Naive thymus-derived CD4-positive, alpha-beta T cell (primary cell): ENCODE measurements at regions of chr5 and their contacts with region 1.

Region 1: DNA sequence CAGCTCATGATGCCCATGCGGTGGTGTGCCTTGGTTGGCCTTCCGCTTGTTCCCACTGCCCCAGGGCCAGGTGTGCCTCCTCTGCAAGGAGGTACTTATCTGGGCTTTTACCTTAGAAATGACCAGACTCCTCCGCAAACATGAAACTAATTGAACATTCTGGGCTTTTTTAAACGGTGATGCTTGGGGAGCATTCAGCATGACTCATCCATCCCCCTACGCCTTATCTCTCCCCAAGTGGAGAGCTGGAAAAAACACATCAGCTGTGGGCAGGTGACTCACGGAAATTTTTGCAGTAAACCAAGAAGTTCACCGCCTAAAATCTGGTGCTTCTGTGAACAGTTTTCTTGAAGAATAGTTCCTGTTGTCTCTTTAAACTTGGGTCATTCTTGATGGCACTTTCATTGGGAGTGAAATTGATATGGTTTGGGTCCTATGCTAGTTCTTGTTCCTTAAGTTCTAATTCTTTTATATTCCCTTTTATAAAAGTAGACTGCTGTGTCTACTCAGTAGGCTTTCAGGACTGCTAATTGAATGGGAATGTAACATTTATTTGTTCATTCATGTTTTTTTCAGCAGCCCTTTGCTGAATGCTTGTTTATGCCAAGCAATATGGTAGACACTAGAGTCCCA is 39.6 kb downstream of the SFXN1 start:
- DNase-seq: peak in 2 of 9 donors; percentile 62 to 81
- ATAC-seq: no peak
- H3K4me3 ChIP-seq: no peak overlapping the region
- H3K4me3 Mint-ChIP-seq: peak overlapping the region; percentile 26 to 80 (median 54)
- H3K27ac ChIP-seq: peak overlapping the region; percentile 22
- H3K27ac Mint-ChIP-seq: peak overlapping the region; percentile 60 to 97 (median 93)
- H3K4me1 ChIP-seq: peaks cover 44 to 50% of the 10 kb centered on the region in 2 donors
- H3K4me1 Mint-ChIP-seq: peaks cover 47 to 87% (median 76%) of the 10 kb centered on the region in 7 donors
- H3K27me3 ChIP-seq: no peaks in the 10 kb centered on the region
- H3K27me3 Mint-ChIP-seq: no peaks in the 10 kb centered on the region

Region 2: DNA sequence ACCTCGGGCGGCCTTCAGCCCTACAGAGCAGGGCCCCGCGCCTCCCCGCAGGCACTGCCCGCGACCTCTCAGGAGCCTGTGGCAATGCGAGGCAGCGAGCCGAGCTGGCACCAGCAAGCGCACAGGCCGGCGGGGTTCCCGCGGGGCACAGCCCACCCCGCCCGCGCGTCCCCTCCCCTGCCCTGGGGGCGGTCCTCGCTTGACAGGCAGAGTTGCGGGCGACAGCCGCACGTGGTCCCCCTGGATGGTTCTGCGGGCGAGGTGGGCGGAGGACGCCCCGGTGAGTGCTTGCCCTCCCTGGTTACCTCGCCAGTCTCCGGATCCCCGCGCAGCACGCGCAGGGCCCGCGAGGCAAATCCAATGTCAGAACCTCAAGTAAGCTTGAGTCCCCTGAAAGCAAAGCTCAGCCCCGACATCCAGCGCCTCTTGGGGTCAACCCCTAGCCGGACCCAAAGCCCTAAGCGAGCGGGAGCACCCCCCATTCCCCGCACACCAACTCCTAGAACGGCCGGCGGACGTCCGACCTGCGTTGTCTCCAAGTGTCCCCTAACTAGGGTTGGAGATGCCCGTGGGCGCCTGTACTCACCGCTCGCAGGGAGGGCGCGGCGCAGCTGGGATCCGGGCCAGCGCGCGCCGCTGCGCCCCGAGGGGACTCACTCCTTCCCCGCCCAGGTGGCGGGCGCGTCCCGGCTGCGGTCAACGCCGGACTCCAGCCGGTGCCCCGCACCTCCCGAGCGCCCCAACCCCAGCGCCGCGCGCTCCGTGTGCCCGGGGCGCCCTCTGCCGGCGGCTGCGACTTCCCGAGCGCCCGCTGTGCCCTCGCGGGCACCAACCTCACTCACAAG is 73.7 kb before region 1 on chr5 and contains the start of gene DRD1:
- CTCF ChIA-PET with region 1: no interaction called
- POLR2A ChIA-PET with region 1: no interaction called
- intact Hi-C with region 1: no loop called
- DNase-seq: peak in 7 of 9 donors; percentile 37 to 74 (median 42)
- ATAC-seq: peak; percentile 78
- H3K4me3 ChIP-seq: peak within 1 kb of the TSS; percentile 30
- H3K4me3 Mint-ChIP-seq: peak within 1 kb of the TSS; percentile 42 to 86 (median 77)
- H3K27ac ChIP-seq: no peak within 1 kb of the TSS
- H3K27ac Mint-ChIP-seq: no peak within 1 kb of the TSS
- H3K4me1 ChIP-seq: peaks cover 0 to 5% of the 10 kb centered on the region in 2 donors
- H3K4me1 Mint-ChIP-seq: peaks cover 0 to 14% (median 7%) of the 10 kb centered on the region in 7 donors
- H3K27me3 ChIP-seq: peaks cover 3 to 12% of the 10 kb centered on the region in 2 donors
- H3K27me3 Mint-ChIP-seq: peaks cover 49 to 82% (median 51%) of the 10 kb centered on the region in 5 donors
- total RNA-seq, gene DRD1: not detected

Region 3: DNA sequence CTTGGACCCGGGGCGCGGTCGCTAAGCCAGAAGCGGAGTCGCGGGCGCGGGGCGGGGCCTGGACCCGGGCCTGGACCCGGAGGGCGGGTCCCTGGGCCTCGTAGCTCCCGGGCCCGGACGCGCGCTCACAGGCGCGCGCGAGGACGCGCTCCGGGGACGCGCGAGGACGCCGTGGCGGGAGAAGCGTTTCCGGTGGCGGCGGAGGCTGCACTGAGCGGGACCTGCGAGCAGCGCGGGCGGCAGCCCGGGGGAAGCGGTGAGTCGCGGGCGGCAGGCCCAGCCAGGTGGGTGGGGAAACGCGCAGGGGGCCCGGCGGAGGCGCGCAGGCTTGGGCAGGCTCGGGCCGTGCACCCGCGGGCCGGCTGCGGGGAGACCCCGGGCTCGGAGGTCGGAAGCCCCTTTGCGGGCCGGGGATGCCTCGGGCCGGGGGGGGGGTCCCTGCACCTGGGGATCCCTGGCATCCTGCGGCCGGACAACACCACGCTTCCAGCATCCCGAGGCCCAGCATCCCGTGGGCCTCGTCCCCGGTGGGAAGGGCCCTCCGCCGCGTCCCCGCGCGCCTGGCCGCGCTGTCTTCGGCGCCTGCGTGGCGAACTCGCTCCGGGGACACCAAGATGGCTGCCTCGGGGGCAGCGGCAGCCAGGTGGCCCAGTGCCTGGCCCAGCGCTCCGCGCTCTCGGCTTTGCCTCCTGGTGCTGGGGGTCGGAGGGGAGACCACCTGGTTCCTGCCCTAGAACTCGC is 39.4 kb before region 1 on chr5 and contains the start of gene SFXN1:
- CTCF ChIA-PET with region 1: interaction called, 6 read pairs
- POLR2A ChIA-PET with region 1: interaction called, 18 read pairs
- intact Hi-C with region 1: loop called (anchors 1 kb)
- DNase-seq: peak; percentile 56 to 90 (median 76)
- ATAC-seq: peak; percentile 82
- H3K4me3 ChIP-seq: peak within 1 kb of the TSS; percentile 93
- H3K4me3 Mint-ChIP-seq: peak within 1 kb of the TSS; percentile 95 to 98 (median 98)
- H3K27ac ChIP-seq: peak within 1 kb of the TSS; percentile 72
- H3K27ac Mint-ChIP-seq: peak within 1 kb of the TSS; percentile 71 to 98 (median 95)
- H3K4me1 ChIP-seq: peaks cover 29 to 34% of the 10 kb centered on the region in 2 donors
- H3K4me1 Mint-ChIP-seq: peaks cover 33 to 64% (median 54%) of the 10 kb centered on the region in 7 donors
- H3K27me3 ChIP-seq: no peaks in the 10 kb centered on the region
- H3K27me3 Mint-ChIP-seq: peaks cover 0 to 19% (median 4%) of the 10 kb centered on the region in 5 donors
- total RNA-seq, gene SFXN1: 58.7 to 177 (median 88.9) TPM

Region 4: GRCh38 chr5:175501759-175502339 is 16.1 kb before region 1 on chr5:
- CTCF ChIA-PET with region 1: no interaction called
- POLR2A ChIA-PET with region 1: interaction called, 7 read pairs
- intact Hi-C with region 1: loop called (anchors 1 kb)
- DNase-seq: no peak
- ATAC-seq: no peak
- H3K4me3 ChIP-seq: no peak overlapping the region
- H3K4me3 Mint-ChIP-seq: no peak overlapping the region
- H3K27ac ChIP-seq: no peak overlapping the region
- H3K27ac Mint-ChIP-seq: peak overlapping the region in 7 of 9 donors; percentile 4 to 76 (median 64)
- H3K4me1 ChIP-seq: no peaks in the 10 kb centered on the region
- H3K4me1 Mint-ChIP-seq: peaks cover 0 to 53% (median 41%) of the 10 kb centered on the region in 7 donors
- H3K27me3 ChIP-seq: no peaks in the 10 kb centered on the region
- H3K27me3 Mint-ChIP-seq: no peaks in the 10 kb centered on the region